AG04450 (cell line): ENCODE measurements at regions of chr2 and their contacts with region 1.

Region 1: GRCh38 chr2:10408649-10409579 is 39.2 kb downstream of the ODC1 start:
- DNase-seq: no peak
- H3K4me3 ChIP-seq: peak overlapping the region; percentile 17; the same call in 1 of the 2 replicates
- H3K27ac ChIP-seq: peak overlapping the region; percentile 21
- H3K27me3 ChIP-seq: no peaks in the 10 kb centered on the region
- CTCF ChIP-seq: peak; percentile 95

Region 2: GRCh38 chr2:10072656-10073480 is 336.0 kb before region 1 on chr2:
- CTCF ChIA-PET with region 1: interaction called, 34 read pairs
- POLR2A ChIA-PET with region 1: interaction called, 3 read pairs
- DNase-seq: peak; percentile 71
- H3K4me3 ChIP-seq: no peak overlapping the region
- H3K27ac ChIP-seq: no peak overlapping the region
- H3K27me3 ChIP-seq: peaks cover 39% of the 10 kb centered on the region
- CTCF ChIP-seq: peak; percentile 88

Region 3: GRCh38 chr2:10122386-10123280 is 286.3 kb before region 1 on chr2 and contains the start of gene RRM2:
- CTCF ChIA-PET with region 1: interaction called, 140 read pairs
- POLR2A ChIA-PET with region 1: interaction called, 7 read pairs
- DNase-seq: peak; percentile 51
- H3K4me3 ChIP-seq: peak within 1 kb of the TSS; percentile 79
- H3K27ac ChIP-seq: peak within 1 kb of the TSS; percentile 47
- H3K27me3 ChIP-seq: no peaks in the 10 kb centered on the region
- CTCF ChIP-seq: no peak
- polyA plus RNA-seq, gene RRM2: 13.7 and 21.7 TPM in 2 replicates

Region 4: GRCh38 chr2:10157293-10157692 is 251.6 kb before region 1 on chr2:
- CTCF ChIA-PET with region 1: interaction called, 11 read pairs
- POLR2A ChIA-PET with region 1: no interaction called
- DNase-seq: no peak
- H3K4me3 ChIP-seq: no peak overlapping the region
- H3K27ac ChIP-seq: no peak overlapping the region
- H3K27me3 ChIP-seq: no peaks in the 10 kb centered on the region
- CTCF ChIP-seq: no peak

Region 5: GRCh38 chr2:10305715-10306114 is 103.2 kb before region 1 on chr2:
- CTCF ChIA-PET with region 1: interaction called, 19 read pairs
- POLR2A ChIA-PET with region 1: interaction called, 8 read pairs
- DNase-seq: no peak
- H3K4me3 ChIP-seq: no peak overlapping the region
- H3K27ac ChIP-seq: no peak overlapping the region
- H3K27me3 ChIP-seq: no peaks in the 10 kb centered on the region
- CTCF ChIP-seq: 0 out of 2 replicates have a peak, but pooled peaks have one; percentile 17

Region 6: GRCh38 chr2:10389573-10389972 is 19.3 kb before region 1 on chr2:
- CTCF ChIA-PET with region 1: interaction called, 20 read pairs
- POLR2A ChIA-PET with region 1: no interaction called
- DNase-seq: no peak
- H3K4me3 ChIP-seq: no peak overlapping the region
- H3K27ac ChIP-seq: no peak overlapping the region
- H3K27me3 ChIP-seq: no peaks in the 10 kb centered on the region
- CTCF ChIP-seq: no peak